Activated CD4-positive, alpha-beta memory T cell treated with anti-CD3 and anti-CD28 coated beads, Interleukin-2, amount 10 ng/mL, durations not matched to agents 7 days and 5 days (primary cell): ENCODE measurements at regions of chr2 and their contacts with region 1.

Region 1: DNA sequence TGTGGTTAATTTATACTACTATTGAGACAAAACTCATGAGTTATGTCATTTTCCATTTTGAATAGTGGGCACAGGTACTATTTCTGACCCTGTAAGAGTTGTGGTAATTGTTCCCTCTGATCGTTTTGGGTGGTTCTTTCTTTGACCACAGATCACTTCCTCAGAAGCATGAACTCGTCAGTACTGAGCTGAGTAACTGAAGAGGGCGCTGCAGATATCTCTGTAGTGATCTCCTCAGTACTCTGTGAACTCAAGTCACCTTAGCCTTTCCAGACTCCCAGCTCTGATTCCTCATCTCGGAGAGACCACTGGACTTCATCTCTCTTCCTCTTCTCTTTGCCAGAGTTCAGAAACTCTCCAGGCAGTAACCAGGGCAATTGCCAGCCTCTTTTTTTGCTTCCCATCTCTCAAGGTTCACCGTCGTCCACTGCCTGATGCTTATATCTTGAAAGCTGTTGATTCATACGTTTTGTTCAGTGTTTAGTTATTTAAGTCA is 9.4 kb upstream of the IL1RL1 start:
- DNase-seq: peak; percentile 61
- H3K4me3 Mint-ChIP-seq: peak overlapping the region; percentile 3
- H3K27ac Mint-ChIP-seq: peak overlapping the region; percentile 9
- H3K4me1 Mint-ChIP-seq: peaks cover 42% of the 10 kb centered on the region
- H3K27me3 Mint-ChIP-seq: peaks cover 26% of the 10 kb centered on the region

Region 2: GRCh38 chr2:102208774-102209173 is 93.1 kb before region 1 on chr2:
- CTCF ChIA-PET with region 1: no interaction called
- POLR2A ChIA-PET with region 1: no interaction called
- DNase-seq: no peak
- H3K4me3 Mint-ChIP-seq: no peak overlapping the region
- H3K27ac Mint-ChIP-seq: no peak overlapping the region
- H3K4me1 Mint-ChIP-seq: no peaks in the 10 kb centered on the region
- H3K27me3 Mint-ChIP-seq: no peaks in the 10 kb centered on the region

Region 3: DNA sequence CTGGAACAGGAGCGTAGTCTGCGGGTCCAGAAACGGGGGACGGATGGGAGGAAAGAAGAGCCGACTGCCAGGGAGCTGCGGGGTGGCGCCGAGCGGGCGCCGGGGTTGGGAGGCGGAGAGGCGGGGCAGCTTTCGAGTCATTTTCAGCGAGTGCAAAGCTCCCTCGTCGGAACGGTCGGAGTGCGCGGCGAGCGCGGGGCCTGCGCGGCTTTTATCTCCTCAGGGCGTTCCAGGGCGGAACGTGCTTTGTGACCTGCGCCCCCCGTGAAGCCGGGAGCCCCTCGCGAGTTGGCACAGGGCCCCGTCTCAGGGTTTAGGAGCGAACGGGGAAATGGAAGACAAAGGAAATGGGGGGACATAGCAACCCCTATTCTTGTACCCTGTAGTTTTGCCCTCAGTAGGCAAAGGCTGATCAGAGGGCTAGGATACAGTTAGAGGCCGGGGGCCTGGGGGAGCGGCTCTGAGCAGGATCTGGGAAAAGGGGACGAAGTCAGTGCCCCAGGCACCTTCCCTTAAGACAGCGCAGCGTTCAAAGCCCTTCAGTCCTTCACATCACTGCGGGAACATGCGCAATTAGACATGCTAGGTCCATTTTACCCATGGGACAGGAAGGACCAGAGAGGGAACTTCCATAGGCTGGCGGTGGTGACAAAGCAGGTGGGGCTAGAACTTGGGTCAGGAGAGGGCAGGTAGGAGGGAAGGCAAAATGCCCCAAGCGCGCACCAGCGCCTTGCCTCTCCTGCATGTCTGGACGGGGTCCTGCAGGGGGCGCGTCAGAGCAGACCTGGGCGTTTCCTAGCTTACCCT is 50.7 kb before region 1 on chr2:
- CTCF ChIA-PET with region 1: interaction called, 11 read pairs
- POLR2A ChIA-PET with region 1: interaction called, 3 read pairs
- DNase-seq: peak; percentile 69
- H3K4me3 Mint-ChIP-seq: peak overlapping the region; percentile 76
- H3K27ac Mint-ChIP-seq: peak overlapping the region; percentile 61
- H3K4me1 Mint-ChIP-seq: peaks cover 41% of the 10 kb centered on the region
- H3K27me3 Mint-ChIP-seq: peaks cover 6% of the 10 kb centered on the region

Region 4: DNA sequence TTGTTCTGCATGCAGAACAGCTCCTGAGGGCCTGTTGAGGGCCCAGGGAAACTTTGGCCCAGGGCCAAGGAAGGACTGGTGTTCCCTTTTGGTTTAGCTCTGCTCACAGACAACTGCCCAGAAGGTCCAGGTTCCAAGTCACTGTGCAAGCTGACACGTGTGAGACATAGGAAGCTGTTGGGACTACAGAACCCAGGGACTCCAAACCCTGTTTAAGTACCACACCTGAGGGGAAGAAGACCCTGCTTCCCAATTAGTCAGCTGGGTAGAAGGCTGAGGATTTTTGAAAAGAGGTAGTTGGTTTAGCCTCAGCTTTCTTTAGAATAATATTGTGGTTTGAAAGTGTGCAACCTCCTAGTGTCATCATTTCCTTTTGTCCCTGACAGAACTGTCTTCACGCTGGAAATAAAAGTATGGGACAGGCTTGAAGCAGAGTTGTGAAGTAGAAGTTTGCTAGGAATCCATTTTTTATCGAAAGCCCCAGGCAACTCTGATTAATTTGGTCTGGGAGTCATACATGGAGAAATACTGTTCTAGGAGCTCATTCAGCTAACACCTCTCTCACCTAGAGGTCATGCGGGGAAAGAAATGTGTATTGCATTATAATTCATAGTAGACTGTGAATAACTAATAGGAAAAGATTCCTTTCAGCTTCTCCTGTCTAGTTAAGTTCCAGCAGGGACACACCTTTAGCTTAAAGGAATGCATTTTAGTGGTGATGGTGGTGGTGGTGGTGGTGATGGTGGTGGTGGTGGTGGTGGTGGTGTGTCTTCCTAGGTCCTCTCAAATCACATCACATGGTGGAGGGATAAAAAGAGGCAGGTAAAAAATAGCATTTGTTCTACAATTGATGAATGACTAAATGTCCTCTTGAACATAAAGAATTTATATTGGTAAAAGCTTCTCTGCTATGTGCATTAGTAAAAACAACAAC is 10.3 kb before region 1 on chr2:
- CTCF ChIA-PET with region 1: interaction called, 13 read pairs
- POLR2A ChIA-PET with region 1: interaction called, 11 read pairs
- DNase-seq: no peak
- H3K4me3 Mint-ChIP-seq: no peak overlapping the region
- H3K27ac Mint-ChIP-seq: peak overlapping the region; percentile 29
- H3K4me1 Mint-ChIP-seq: peaks cover 39% of the 10 kb centered on the region
- H3K27me3 Mint-ChIP-seq: peaks cover 9% of the 10 kb centered on the region